GM12878 (cell line): ENCODE measurements at regions of chr22 and their contacts with region 1.

Region 1: DNA sequence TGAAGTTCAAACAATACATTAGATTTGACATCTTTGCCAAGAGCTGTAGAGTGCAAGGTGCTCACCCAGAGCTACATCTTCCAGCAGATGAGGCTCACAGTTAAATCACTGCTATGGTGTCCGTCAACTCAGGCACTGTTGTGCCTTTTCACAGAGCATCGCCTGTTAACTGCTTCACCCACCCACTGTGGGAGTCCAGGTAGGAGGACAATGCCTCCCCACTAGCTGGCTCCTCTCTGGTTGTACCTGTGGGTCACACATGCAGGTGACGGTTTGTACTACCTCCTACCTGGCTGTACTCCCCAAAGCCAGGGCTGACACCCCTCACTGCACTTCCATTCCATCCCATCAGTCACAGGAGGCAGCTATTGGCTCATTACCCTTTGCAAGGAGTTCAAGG is 84.6 kb upstream of the TOP3B start:
- DNase-seq: no peak
- ATAC-seq: no peak
- H3K4me3 ChIP-seq: no peak overlapping the region
- H3K27ac ChIP-seq: no peak overlapping the region
- H3K4me1 ChIP-seq: peaks cover 12% of the 10 kb centered on the region
- H3K27me3 ChIP-seq: no peaks in the 10 kb centered on the region
- CTCF ChIP-seq: no peak
- EP300 ChIP-seq: no peak
- POLR2A ChIP-seq: no peak
- RAD21 ChIP-seq: no peak

Region 2: GRCh38 chr22:21698430-21699329 is 368.5 kb before region 1 on chr22:
- CTCF ChIA-PET with region 1: no interaction called
- POLR2A ChIA-PET with region 1: no interaction called
- RAD21 ChIA-PET with region 1: no interaction called
- SMC1A ChIA-PET with region 1: no interaction called
- in situ Hi-C with region 1: no loop called
- intact Hi-C with region 1: no loop called
- DNase-seq: no peak
- ATAC-seq: no peak
- H3K4me3 ChIP-seq: no peak overlapping the region
- H3K27ac ChIP-seq: no peak overlapping the region
- H3K4me1 ChIP-seq: no peaks in the 10 kb centered on the region
- H3K27me3 ChIP-seq: no peaks in the 10 kb centered on the region
- CTCF ChIP-seq: no peak
- EP300 ChIP-seq: no peak
- POLR2A ChIP-seq: no peak; the same call in 1 of the 2 replicates
- RAD21 ChIP-seq: no peak

Region 3: DNA sequence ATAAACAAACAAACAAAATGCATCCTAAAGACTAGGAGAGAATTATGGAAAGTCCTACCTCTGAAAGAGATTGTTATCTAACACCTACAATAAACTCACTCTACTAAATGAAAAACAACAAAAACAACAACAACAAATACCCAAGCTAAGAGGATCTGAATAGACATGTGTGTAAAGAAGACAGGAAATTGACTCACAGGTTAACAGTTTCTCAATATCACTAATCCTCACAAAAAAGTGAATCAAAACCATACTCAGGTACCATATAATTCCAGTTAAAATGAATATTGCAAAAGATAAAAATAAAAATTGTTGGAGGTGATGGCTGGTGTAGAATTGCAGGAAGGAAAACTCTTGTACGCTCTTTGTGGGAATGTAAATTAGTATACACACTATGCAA is 25.8 kb after region 1 on chr22:
- CTCF ChIA-PET with region 1: interaction called, 92 read pairs
- POLR2A ChIA-PET with region 1: no interaction called
- RAD21 ChIA-PET with region 1: interaction called, 50 read pairs
- SMC1A ChIA-PET with region 1: interaction called, 70 read pairs
- in situ Hi-C with region 1: no loop called
- intact Hi-C with region 1: loop called (anchors 2 kb)
- DNase-seq: no peak
- ATAC-seq: peak; percentile 44; the same call in 2 of the 3 replicates
- H3K4me3 ChIP-seq: no peak overlapping the region
- H3K27ac ChIP-seq: no peak overlapping the region
- H3K4me1 ChIP-seq: peaks cover 3% of the 10 kb centered on the region
- H3K27me3 ChIP-seq: no peaks in the 10 kb centered on the region
- CTCF ChIP-seq: no peak
- EP300 ChIP-seq: no peak
- POLR2A ChIP-seq: no peak
- RAD21 ChIP-seq: no peak